ENCODE measurements at regions of chr1 and their contacts with region 1.

Region 1: DNA sequence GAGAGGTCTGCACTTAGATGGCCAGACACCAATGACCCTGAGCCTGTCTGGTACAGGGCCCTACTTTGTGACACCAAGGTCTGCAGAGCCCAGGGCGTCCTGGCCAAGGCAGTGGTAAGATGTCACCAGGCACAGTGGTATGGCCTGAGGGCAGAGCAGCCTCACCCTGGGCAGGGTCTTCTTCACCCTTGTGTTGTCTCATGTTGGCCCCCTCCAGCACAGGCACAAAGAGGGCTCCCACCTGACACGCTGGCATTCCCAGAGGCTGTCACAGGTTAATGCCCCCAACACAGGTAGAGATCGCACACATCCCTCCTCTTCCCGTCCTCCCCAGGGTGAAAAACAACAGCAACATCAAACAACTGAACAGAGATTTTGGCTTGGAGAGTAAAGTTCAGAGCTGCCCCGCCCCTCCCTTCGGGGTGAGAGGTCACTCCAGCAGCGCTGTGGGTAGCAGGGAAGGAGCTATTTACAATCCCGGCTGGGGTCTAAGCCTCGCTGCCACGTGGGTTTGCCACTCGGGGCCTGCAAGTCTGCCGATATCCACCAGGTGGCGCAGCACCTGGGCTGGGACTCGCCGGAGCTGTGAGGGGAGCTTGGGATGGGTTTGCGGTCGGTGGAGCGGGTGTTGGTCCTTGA is 12.6 kb downstream of the EFNA3 start:
- DNase-seq: peak; percentile 82 to 88 (median 86)
- ATAC-seq: peak; percentile 76 to 89 (median 88)
- H3K4me3 ChIP-seq: peak overlapping the region; percentile 0 to 42 (median 28)
- H3K27ac ChIP-seq: peak overlapping the region; percentile 39 to 79 (median 57)
- H3K4me1 ChIP-seq: peaks cover 0 to 25% (median 12%) of the 10 kb centered on the region in 4 donors
- H3K27me3 ChIP-seq: no peaks in the 10 kb centered on the region
- CTCF ChIP-seq: peak; percentile 97 to 100 (median 98)
- POLR2A ChIP-seq: no peak

Region 2: GRCh38 chr1:155061381-155062150 is 29.6 kb before region 1 on chr1:
- intact Hi-C with region 1: no loop called
- DNase-seq: peak; percentile 88 to 91 (median 89)
- ATAC-seq: peak; percentile 67 to 77 (median 72)
- H3K4me3 ChIP-seq: no peak overlapping the region
- H3K27ac ChIP-seq: no peak overlapping the region
- H3K4me1 ChIP-seq: peaks cover 0 to 27% (median 14%) of the 10 kb centered on the region in 4 donors
- H3K27me3 ChIP-seq: no peaks in the 10 kb centered on the region
- CTCF ChIP-seq: peak; percentile 98 to 99 (median 99)
- POLR2A ChIP-seq: no peak

Region 3: GRCh38 chr1:155167166-155168104 is 76.2 kb after region 1 on chr1:
- intact Hi-C with region 1: loop called (anchors 5 kb)
- DNase-seq: peak; percentile 89 to 91 (median 90)
- ATAC-seq: peak; percentile 86 to 90 (median 88)
- H3K4me3 ChIP-seq: peak overlapping the region in 1 of 3 donors; percentile 10
- H3K27ac ChIP-seq: peak overlapping the region in 1 of 3 donors; percentile 36
- H3K4me1 ChIP-seq: peaks cover 0 to 6% (median 2%) of the 10 kb centered on the region in 4 donors
- H3K27me3 ChIP-seq: no peaks in the 10 kb centered on the region
- CTCF ChIP-seq: peak; percentile 86 to 91 (median 86)
- POLR2A ChIP-seq: no peak